ENCODE measurements at regions of chr12 and their contacts with region 1.

Region 1: GRCh38 chr12:6632026-6632983 is 3.5 kb downstream of the LPAR5 start:
- DNase-seq: peak; percentile 51
- ATAC-seq: peak; percentile 53
- H3K4me3 Mint-ChIP-seq: peak overlapping the region; percentile 86
- H3K27ac Mint-ChIP-seq: peak overlapping the region; percentile 98
- H3K4me1 Mint-ChIP-seq: peaks cover 84% of the 10 kb centered on the region
- H3K27me3 Mint-ChIP-seq: no peaks in the 10 kb centered on the region
- CTCF ChIP-seq: no peak

Region 2: DNA sequence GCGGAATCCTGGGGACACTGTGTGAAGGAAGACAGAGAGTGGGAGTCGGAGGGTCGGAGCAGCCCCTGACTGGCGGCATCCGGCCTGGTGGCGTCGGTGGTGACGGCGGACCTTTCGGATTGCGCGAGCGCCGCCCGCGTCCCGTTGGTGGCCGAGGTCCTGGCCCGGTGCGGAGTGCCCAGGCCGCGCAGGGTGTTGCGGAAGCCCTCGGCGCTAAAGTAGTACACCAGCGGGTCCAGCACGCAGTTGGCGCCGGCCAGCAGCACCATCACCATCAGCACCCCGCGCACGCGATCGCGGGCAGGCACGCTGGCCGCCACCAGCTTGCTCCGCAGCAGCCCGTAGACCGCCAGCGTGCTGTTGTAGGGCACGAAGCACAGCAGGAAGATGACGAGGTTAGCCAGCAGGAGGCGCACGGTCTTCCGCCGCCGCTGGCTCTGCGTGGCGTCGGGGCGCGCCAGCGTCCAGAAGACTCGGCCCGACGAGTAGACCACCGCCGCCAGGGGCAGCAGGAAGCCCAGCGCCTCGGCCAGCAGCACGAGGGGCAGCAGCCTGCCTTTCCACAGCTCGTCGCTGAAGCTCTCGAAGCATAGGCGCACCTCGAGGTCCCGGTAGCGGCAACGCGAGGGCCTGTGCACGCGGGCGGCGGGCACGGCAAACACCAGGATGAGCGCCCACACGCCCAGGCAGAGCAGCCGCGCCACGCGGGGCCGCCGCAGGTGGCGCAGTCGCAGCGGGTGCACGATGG is 12.0 kb before region 1 on chr12:
- CTCF ChIA-PET with region 1: interaction called, 13 read pairs
- POLR2A ChIA-PET with region 1: interaction called, 126 read pairs
- intact Hi-C with region 1: loop called (anchors 1 kb)
- DNase-seq: peak; percentile 53
- ATAC-seq: peak; percentile 66
- H3K4me3 Mint-ChIP-seq: no peak overlapping the region
- H3K27ac Mint-ChIP-seq: peak overlapping the region; percentile 73
- H3K4me1 Mint-ChIP-seq: peaks cover 40% of the 10 kb centered on the region
- H3K27me3 Mint-ChIP-seq: no peaks in the 10 kb centered on the region
- CTCF ChIP-seq: no peak

Region 3: GRCh38 chr12:6647083-6647604 is 14.8 kb after region 1 on chr12 and contains the start of gene ACRBP:
- CTCF ChIA-PET with region 1: interaction called, 4 read pairs
- POLR2A ChIA-PET with region 1: interaction called, 105 read pairs
- intact Hi-C with region 1: loop called (anchors 1 kb)
- DNase-seq: peak; percentile 71
- ATAC-seq: peak; percentile 83
- H3K4me3 Mint-ChIP-seq: peak within 1 kb of the TSS; percentile 84
- H3K27ac Mint-ChIP-seq: peak within 1 kb of the TSS; percentile 74
- H3K4me1 Mint-ChIP-seq: peaks cover 39% of the 10 kb centered on the region
- H3K27me3 Mint-ChIP-seq: no peaks in the 10 kb centered on the region
- CTCF ChIP-seq: no peak
- total RNA-seq, gene ACRBP: 5.4 and 7.7 TPM in 2 replicates

Region 4: DNA sequence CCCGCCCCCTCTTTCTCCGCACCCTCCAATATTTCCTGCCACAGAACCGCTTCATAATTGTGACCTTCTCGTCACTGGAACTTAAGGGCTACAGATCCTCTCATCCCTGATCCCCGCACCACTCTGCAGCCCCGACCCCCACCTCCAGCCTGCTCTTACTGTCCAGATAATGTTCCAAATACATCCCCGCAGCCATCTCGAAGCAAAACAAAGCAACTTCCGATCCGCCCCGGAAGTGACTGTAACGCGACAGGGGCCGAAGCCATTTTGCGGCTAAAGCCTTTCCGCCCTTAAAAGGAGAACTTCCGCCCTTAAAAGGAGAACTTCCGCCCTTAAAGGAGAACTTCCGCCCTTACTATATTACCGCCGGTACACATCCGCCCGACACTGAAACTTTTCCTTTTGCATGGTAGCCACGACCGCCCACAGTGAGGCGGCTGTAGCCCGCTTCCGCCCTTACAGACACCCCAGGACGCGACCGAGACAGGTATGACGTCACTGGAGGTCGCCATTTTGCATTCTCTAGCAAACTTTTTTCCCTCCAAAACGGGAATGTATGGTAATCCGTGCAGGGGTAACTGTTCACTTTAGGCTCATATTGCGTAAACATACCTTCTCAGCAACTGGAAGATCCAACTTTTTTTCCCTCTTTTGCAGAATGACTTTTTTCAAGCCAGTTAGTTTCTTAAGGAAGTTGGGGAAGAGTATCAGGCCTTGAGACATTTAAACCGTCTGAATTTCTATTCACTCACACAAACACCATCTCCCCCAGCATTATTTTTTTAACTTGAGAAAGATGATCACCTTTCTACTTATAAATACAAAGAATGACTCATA is 30.8 kb after region 1 on chr12 and contains the start of gene ING4:
- CTCF ChIA-PET with region 1: interaction called, 4 read pairs
- POLR2A ChIA-PET with region 1: interaction called, 7 read pairs
- intact Hi-C with region 1: loop called (anchors 1 kb)
- DNase-seq: peak; percentile 80
- ATAC-seq: peak; percentile 97
- H3K4me3 Mint-ChIP-seq: peak within 1 kb of the TSS; percentile 97
- H3K27ac Mint-ChIP-seq: peak within 1 kb of the TSS; percentile 95
- H3K4me1 Mint-ChIP-seq: peaks cover 27% of the 10 kb centered on the region
- H3K27me3 Mint-ChIP-seq: no peaks in the 10 kb centered on the region
- CTCF ChIP-seq: no peak
- total RNA-seq, gene ING4: 31.6 and 39.2 TPM in 2 replicates

Region 5: DNA sequence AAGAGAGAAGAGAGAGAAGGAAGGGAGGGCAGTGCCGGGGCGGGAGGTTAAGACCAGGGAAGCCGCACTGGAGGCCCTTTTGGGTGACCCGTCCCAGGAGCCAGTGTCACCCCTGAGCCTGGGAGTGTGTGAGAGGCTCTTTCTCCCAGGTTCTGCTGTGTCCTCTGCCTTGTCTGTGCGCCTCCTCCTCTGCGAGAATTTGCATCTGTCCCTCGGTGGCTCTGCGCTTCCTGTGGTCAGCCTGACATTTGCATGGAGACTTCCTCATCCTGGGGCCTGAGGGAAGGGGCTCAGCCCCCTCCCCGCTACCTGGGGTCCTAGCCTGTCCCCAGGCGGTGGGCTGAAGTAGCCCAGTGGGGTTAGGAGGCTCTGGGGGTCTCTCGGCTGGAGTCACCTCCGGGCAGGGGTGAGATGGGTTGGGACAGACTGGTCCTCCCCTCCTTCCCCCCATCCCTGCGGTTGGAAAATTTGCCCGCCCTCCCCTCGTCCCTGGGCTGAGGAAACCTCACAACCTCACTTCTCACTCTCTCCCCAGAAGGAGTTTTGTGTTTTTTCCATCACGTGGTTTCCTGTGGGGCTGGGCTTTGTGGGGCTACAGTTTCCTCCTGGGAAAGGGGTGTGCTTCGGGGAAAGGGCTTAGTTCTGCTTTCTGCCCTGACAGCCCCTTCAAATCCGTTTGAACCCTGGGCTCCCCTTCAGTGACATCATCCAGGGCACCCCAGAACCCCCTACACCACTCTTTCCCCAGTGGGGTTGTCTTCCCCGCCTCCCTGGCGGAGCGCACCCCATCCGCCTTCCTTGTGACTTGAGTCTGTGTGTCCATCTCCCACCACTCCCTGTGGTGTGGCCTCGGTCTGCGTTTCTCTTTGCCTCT is 321.4 kb after region 1 on chr12:
- CTCF ChIA-PET with region 1: no interaction called
- POLR2A ChIA-PET with region 1: interaction called, 3 read pairs
- intact Hi-C with region 1: loop called (anchors 10 kb)
- DNase-seq: peak; percentile 72
- ATAC-seq: peak; percentile 38
- H3K4me3 Mint-ChIP-seq: peak overlapping the region; percentile 99
- H3K27ac Mint-ChIP-seq: peak overlapping the region; percentile 96
- H3K4me1 Mint-ChIP-seq: peaks cover 85% of the 10 kb centered on the region
- H3K27me3 Mint-ChIP-seq: no peaks in the 10 kb centered on the region
- CTCF ChIP-seq: no peak